H1 (cell line): ENCODE measurements at regions of chr19 and their contacts with region 1.

Region 1: DNA sequence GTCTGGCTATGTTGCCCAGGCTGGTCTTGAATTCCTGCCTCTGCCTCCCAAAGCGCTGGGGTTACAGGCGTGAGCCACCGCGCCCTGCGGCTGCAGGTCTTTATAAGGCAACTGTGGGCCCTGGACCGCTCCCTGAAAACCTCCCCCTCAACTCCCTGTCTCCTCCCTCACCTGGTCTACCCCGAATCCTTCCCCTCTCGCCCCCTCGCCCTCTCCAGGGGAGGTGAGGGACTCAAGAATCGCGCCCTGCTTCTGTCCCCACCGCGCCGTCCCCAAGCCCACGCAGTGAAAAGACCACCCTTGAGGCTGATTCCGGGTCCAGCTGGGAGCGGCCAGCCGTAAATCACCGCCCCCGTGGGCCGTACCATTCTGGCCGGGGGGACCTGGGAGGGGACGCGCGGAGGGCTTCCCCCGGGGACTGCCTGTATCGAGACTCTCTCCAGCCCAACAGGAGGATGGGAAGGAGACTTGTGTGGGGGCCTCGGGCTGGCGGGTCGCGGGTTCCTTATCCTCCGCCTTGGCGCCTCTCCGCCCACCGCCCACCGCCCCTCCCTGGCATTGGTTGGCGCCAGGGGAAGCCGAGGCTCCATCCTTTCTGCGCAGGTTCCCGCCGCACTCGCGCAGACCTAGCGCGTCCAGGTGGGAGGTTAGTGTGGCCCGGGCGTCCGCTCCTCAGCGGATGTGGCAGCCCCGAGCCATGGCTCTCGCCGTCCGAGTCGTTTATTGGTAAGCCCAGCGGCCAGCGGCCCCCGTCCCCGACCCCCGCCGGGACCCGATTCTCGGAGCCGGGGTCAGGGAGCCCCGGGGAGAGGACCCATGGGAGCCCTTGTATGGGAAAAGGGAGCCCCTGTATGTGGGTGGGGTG is at the start of gene SELENOW:
- DNase-seq: peak; percentile 46 to 95
- H3K4me3 ChIP-seq: peak within 1 kb of the TSS; percentile 57 to 97 (median 75)
- H3K27ac ChIP-seq: peak within 1 kb of the TSS; percentile 99
- H3K4me1 ChIP-seq: peaks cover 0 to 10% (median 7%) of the 10 kb centered on the region in 4 experiments; a peak in 5 of 7 replicates
- H3K27me3 ChIP-seq: no peaks in the 10 kb centered on the region
- CTCF ChIP-seq: no peak
- EP300 ChIP-seq: peak in 1 of 2 experiments; percentile 99; a peak in 2 of 3 replicates
- POLR2A ChIP-seq: peak; percentile 87 to 90
- RAD21 ChIP-seq: no peak
- total RNA-seq, gene SELENOW: 361 and 371 TPM in 2 replicates

Region 2: DNA sequence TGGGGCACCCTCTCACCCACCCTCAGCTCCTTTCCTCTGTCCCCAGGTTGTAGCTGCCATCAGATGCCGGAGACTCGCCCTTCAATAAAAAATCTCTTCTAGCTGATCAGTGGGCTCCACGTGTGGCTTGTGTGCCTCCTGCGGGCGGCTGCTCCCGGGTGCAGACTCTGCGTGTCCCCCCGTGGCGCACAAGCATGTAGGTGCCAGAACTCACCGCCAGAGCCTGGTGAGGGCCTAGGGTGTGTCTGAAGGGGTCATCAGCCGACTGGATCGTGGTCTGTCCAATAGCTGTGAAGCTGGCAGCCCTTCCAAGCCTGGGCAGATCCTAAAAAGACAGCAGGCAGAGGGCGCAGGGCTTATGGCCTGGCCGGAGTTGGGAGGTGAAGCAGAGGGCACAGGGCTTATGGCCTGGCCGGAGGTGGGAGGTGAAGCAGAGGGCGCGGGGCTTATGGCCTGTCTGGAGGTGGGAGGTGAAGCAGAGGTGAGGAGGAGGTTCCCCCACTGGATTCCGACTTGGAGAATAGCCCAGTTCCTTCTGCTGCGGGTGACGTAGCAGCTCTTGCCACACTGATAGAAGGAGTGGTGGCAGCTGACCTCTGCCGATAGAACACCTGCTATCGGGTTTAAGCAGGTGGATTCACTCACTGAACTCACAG is 21.2 kb before region 1 on chr19:
- CTCF ChIA-PET with region 1: interaction called, 3 read pairs
- POLR2A ChIA-PET with region 1: interaction called, 12 read pairs
- DNase-seq: no peak
- H3K4me3 ChIP-seq: no peak overlapping the region
- H3K27ac ChIP-seq: no peak overlapping the region
- H3K4me1 ChIP-seq: no peaks in the 10 kb centered on the region
- H3K27me3 ChIP-seq: no peaks in the 10 kb centered on the region
- CTCF ChIP-seq: no peak
- EP300 ChIP-seq: no peak
- POLR2A ChIP-seq: peak in 1 of 2 experiments; percentile 37; a peak in 2 of 3 replicates
- RAD21 ChIP-seq: no peak

Region 3: DNA sequence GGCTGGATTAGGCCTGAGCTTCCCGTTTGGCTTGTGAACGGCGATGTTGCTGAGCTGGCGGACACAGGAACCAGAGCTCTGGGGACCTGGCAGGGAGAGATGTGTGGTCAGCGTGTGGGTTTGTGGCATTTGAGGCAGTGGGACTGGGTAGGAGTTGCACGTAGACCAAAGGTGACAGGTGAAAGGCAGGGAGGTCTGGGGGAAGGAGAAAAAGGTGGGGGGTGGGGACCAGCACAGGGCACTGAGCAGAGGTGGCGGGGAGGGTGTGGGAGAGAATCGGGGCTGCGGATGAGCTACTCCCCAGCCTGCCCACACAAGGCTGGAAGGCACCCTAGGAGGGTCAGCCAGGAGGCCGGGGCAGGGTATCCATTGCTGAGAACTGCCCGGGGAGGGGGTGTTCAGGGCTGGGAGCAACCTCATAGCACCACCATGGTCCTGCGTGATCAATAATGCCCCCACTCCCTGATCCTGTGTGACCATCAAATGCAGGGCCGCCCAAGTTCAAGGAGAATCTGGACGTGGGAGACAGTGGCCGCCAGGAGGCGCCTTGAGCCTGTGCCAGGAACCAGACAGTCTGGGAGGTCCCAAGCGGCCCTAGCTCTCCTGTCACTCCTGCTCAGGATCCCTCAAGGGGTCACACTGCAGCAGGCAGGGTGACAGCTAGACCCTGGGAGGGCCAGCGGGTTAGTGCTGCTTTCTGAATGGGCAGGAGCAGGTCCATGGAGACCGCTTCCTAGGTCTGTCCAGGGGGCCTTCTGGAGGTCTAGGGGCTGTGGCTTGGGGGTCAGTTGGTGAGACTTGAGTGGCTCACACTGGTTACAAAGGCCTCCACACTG is 12.6 kb before region 1 on chr19:
- CTCF ChIA-PET with region 1: interaction called, 32 read pairs
- POLR2A ChIA-PET with region 1: interaction called, 34 read pairs
- DNase-seq: peak in 1 of 2 experiments; percentile 93
- H3K4me3 ChIP-seq: no peak overlapping the region
- H3K27ac ChIP-seq: no peak overlapping the region; the same call in 1 of the 2 replicates
- H3K4me1 ChIP-seq: peaks cover 0 to 6% (median 3%) of the 10 kb centered on the region in 4 experiments; a peak in 5 of 7 replicates
- H3K27me3 ChIP-seq: no peaks in the 10 kb centered on the region
- CTCF ChIP-seq: peak; percentile 85 to 95 (median 94)
- EP300 ChIP-seq: no peak
- POLR2A ChIP-seq: no peak
- RAD21 ChIP-seq: peak; percentile 91 to 93